WTC11 (cell line): ENCODE measurements at regions of chr9 and their contacts with region 1.

Region 1: GRCh38 chr9:128275996-128276573 is at the starts of genes GOLGA2 and SWI5:
- DNase-seq: peak; percentile 100
- ATAC-seq: peak; percentile 91
- H3K4me3 Mint-ChIP-seq: peak within 1 kb of the TSS; percentile 92
- H3K27ac Mint-ChIP-seq: peak within 1 kb of the TSS; percentile 97
- H3K4me1 Mint-ChIP-seq: peaks cover 14% of the 10 kb centered on the region
- H3K27me3 Mint-ChIP-seq: no peaks in the 10 kb centered on the region; the same call in 1 of the 2 replicates
- CTCF ChIP-seq: no peak
- total RNA-seq, gene GOLGA2: 54.7 to 66.3 TPM (median 58.8 TPM) in 3 replicates
- total RNA-seq, gene SWI5: 26.2 to 32.0 TPM (median 31.7 TPM) in 3 replicates

Region 2: GRCh38 chr9:128211186-128211980 is 64.7 kb before region 1 on chr9:
- CTCF ChIA-PET with region 1: no interaction called
- POLR2A ChIA-PET with region 1: no interaction called
- DNase-seq: no peak
- ATAC-seq: no peak
- H3K4me3 Mint-ChIP-seq: no peak overlapping the region
- H3K27ac Mint-ChIP-seq: 0 out of 2 replicates have a peak overlapping the region, but pooled peaks have one; percentile 65
- H3K4me1 Mint-ChIP-seq: no peaks in the 10 kb centered on the region
- H3K27me3 Mint-ChIP-seq: peaks cover 22% of the 10 kb centered on the region
- CTCF ChIP-seq: no peak

Region 3: GRCh38 chr9:128225770-128226407 is 50.2 kb before region 1 on chr9:
- CTCF ChIA-PET with region 1: no interaction called
- POLR2A ChIA-PET with region 1: no interaction called
- DNase-seq: no peak
- ATAC-seq: no peak
- H3K4me3 Mint-ChIP-seq: no peak overlapping the region
- H3K27ac Mint-ChIP-seq: no peak overlapping the region
- H3K4me1 Mint-ChIP-seq: no peaks in the 10 kb centered on the region
- H3K27me3 Mint-ChIP-seq: no peaks in the 10 kb centered on the region; the same call in 1 of the 2 replicates
- CTCF ChIP-seq: no peak

Region 4: DNA sequence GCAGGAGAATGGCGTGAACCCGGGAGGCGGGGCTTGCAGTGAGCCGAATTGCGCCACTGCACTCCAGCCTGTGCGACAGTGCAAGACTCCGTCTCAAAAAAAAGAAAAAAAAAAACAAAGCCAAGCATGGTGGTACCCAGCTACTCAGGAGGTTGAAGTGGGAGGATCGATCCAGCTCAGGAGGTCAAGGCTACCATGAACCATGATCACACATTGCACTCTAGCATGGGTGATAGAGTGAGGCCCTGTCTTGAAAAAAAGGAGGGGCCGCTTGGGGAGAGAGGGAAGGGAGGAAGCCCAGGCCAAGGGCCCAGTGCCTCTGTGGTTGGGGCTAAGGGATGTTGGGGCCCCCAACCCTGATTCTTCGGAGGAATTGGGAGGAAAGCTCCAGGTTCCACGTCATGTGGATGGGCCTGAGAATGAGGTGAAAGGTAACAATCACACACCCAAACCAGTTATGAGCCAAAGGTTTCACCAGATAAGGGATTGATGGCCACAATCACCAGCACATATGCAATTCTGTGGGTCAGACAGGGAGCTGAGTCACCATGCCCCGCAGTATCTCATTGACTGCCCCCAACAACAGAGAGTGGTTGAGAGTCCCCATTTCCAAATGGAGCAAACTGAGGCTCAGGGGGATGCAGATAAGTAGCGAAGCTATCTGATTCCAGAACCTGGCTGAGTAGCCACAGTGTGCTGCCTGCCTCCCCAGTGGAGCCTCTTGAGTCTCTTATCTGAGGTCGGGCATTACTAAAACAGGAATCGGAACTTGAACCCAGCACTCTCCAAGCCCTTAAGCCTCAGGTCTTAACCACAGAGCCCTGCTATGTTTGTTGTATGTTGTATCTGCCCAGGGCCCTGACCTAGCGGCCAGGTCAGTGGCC is 20.5 kb after region 1 on chr9:
- CTCF ChIA-PET with region 1: interaction called, 14 read pairs
- POLR2A ChIA-PET with region 1: interaction called, 3 read pairs
- DNase-seq: no peak
- ATAC-seq: no peak
- H3K4me3 Mint-ChIP-seq: no peak overlapping the region
- H3K27ac Mint-ChIP-seq: peak overlapping the region; percentile 23; the same call in 1 of the 2 replicates
- H3K4me1 Mint-ChIP-seq: no peaks in the 10 kb centered on the region
- H3K27me3 Mint-ChIP-seq: peaks cover 2% of the 10 kb centered on the region; the same call in 1 of the 2 replicates
- CTCF ChIP-seq: no peak